ACHN (cell line): ENCODE measurements at regions of chr7 and their contacts with region 1.

Region 1: GRCh38 chr7:85014936-85015660 is 171.8 kb downstream of the SEMA3D start:
- DNase-seq: peak; percentile 15

Region 2: DNA sequence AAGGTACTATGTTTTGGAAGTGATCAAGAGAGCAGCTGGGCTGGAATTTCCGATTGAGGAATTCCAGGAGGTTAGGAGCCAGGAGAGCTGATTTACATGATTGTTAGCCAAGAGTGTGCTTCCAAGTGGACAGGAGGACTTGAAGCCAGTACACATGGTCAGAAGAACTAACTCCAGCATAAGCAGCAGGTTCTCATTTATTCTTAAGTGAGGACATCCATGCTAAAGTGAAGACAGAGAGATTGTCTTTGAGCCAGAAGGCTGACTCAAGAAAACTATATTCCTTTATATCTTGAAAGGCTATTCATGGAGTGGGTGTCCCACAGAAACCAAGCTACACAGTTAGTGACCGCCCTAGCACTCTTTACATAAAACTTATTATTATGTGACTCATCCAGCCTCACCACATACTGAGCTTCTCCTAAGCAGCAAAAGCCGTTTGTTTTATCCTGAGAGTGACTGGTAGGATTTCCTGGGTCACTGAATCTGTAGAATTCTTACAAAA is 763.8 kb before region 1 on chr7:
- in situ Hi-C with region 1: loop called (anchors 10 kb)
- DNase-seq: peak; percentile 68

Region 3: GRCh38 chr7:85237721-85238120 is 222.6 kb after region 1 on chr7:
- in situ Hi-C with region 1: no loop called
- DNase-seq: no peak